Naive thymus-derived CD4-positive, alpha-beta T cell (primary cell): ENCODE measurements at regions of chr1 and their contacts with region 1.

Region 1: DNA sequence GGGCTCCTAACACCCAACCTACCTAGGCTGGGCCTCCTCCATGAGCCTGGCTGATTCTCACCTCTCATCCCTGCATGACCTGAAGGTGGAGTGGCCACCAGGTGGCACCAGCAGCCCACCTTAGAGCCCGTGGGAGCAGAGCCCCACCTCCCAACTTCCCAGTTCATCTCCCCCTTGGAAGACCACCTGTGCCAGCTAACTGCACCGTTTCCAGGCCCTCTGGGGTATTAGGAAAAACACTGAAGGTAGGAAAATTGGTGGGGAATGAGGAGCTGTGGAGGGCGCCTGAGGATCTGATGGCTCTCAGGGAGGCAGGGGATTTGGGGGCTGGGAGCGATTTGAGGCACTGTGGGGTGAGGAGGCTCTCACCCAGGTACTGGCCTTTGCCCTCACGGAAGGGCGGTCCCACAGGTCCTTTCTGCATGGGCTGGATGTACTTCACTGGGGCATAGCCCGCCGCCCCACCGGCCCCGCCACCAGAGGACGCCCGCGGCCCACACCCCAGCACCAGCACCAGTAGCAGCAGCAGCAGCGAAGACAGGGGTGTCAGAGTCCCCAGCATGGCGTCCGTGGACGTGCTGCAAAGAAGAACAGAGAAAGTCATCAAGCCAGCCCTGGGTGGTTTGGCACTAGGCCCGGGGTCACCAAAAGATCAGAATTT is 11.1 kb downstream of the ADPRS start:
- DNase-seq: peak; percentile 50 to 79 (median 65)
- ATAC-seq: peak; percentile 92
- H3K4me3 ChIP-seq: no peak overlapping the region
- H3K4me3 Mint-ChIP-seq: peak overlapping the region in 5 of 10 donors; percentile 12 to 50 (median 35)
- H3K27ac ChIP-seq: no peak overlapping the region
- H3K27ac Mint-ChIP-seq: peak overlapping the region in 1 of 9 donors; percentile 14
- H3K4me1 ChIP-seq: no peaks in the 10 kb centered on the region
- H3K4me1 Mint-ChIP-seq: peaks cover 0 to 10% (median 2%) of the 10 kb centered on the region in 7 donors
- H3K27me3 ChIP-seq: no peaks in the 10 kb centered on the region
- H3K27me3 Mint-ChIP-seq: no peaks in the 10 kb centered on the region

Region 2: DNA sequence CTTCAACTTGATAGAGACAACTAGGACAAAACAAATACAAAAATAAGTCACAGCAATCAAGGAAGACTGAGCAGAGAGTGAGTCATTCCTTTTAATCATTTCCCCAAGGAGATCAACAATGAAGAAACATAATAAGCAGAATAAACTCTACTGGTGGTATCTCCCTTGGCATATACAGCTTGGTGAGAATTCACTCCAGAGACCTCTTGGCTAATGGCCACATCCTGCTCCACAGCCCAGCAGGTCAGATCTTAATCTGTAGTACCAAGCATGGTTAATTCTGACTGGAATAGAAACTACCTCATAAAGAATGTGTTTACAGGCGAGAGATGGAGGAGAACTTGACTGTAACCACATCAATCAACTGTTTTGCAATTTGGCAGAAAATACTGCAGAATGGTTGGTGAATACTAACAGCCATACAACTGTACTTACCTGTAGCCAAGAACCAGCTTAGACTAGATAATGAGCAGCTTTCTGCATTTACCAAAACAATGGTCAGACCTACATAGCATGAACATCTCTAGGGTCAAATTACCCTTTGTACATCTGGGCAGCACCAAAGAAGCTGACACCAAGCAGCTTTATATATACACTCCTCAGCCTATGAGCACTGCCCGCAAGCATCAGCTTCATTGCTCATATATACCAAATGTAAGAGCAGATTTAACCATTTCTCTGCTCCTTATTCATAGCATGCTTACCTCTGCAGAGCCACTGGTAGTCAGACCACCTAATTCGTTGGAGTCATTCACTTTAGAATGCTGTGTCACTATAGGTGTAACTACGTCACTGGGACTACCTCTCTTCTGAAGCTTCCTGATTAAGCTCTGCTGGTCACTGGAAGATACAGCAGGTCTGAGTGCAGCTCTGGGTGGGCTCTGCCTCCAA is 593.7 kb before region 1 on chr1:
- CTCF ChIA-PET with region 1: no interaction called
- POLR2A ChIA-PET with region 1: no interaction called
- intact Hi-C with region 1: no loop called
- DNase-seq: peak in 8 of 9 donors; percentile 29 to 73 (median 56)
- ATAC-seq: peak; percentile 84
- H3K4me3 ChIP-seq: peak overlapping the region; percentile 16
- H3K4me3 Mint-ChIP-seq: peak overlapping the region; percentile 75 to 84 (median 78)
- H3K27ac ChIP-seq: peak overlapping the region; percentile 60
- H3K27ac Mint-ChIP-seq: peak overlapping the region; percentile 73 to 97 (median 93)
- H3K4me1 ChIP-seq: peaks cover 32 to 45% of the 10 kb centered on the region in 2 donors
- H3K4me1 Mint-ChIP-seq: peaks cover 44 to 85% (median 82%) of the 10 kb centered on the region in 7 donors
- H3K27me3 ChIP-seq: no peaks in the 10 kb centered on the region
- H3K27me3 Mint-ChIP-seq: no peaks in the 10 kb centered on the region

Region 3: DNA sequence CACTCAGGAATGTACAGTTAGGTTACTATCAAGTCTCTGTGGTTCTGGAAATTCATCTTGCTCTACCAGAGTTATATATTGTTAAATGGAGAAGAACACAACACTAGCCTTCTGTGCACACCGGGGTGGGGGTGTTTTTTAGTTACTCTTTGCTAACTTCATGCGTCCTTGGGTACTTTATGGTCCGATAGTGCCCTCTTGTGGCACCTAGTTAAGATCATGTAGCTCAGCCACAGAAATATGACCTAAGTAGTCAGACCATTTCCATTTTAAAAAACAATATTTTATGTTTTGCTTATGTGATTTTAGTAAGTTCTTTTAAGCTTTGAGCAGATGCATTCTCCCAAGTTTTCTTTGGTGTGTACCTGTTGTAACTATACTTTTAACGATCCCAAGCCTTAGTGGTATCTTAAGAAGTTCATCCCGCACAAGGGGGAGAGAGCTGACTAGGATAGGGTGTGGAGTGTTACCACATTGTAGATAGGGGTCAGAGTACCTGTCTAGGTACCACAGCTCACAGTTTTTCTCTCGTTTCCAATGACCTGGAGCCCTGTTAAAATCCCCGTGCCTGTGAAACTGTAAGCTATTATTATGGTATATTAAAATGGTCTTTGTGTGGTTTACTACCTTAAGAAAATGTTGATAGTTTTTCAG is 185.8 kb after region 1 on chr1:
- CTCF ChIA-PET with region 1: interaction called, 5 read pairs
- POLR2A ChIA-PET with region 1: no interaction called
- intact Hi-C with region 1: loop called (anchors 1 kb)
- DNase-seq: peak in 7 of 9 donors; percentile 60 to 80 (median 73)
- ATAC-seq: peak; percentile 96
- H3K4me3 ChIP-seq: no peak overlapping the region
- H3K4me3 Mint-ChIP-seq: no peak overlapping the region
- H3K27ac ChIP-seq: no peak overlapping the region
- H3K27ac Mint-ChIP-seq: peak overlapping the region in 8 of 9 donors; percentile 3 to 87 (median 42)
- H3K4me1 ChIP-seq: no peaks in the 10 kb centered on the region
- H3K4me1 Mint-ChIP-seq: peaks cover 4 to 34% (median 17%) of the 10 kb centered on the region in 7 donors
- H3K27me3 ChIP-seq: no peaks in the 10 kb centered on the region
- H3K27me3 Mint-ChIP-seq: no peaks in the 10 kb centered on the region